Dorsolateral prefrontal cortex (tissue), 120 donors: ENCODE measurements at regions of chr7 and their contacts with region 1.

Region 1: DNA sequence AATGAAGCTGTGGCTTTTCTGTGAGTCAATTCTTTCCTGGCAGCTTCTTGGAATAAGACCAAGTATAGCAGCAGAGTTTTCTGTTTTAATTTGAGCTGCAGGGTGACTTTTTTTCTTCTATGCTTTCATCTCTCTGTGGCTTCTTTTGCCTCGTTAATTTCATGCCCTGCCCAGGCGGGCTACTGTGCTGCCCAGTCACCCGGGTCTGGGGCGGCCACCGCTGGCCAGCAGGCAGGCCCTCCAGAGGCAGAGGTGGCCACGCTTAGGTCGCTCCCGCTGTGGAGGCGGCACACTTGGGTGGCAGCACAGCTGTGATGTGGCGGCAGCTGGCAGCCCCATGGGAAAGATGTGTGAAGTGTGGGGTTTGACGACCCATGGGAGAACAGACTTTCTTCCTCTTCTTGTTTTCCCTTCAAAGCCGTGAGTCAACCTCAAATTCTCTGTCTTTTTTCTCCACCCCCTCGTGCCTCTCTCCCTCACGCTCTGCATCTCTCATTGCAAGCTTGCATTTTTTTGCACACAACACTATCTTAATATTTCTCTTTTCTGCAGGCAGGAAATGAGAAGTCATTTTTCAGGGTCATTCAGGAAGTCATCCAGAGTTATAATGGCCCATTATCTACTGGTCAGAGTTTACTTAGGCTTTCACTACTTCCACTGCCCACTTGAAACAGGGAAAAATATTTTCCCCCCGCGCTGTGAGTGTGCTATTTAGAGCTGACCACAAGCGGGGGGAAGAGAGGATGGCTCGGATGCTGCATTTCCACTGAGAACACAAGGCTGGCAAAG is 67.8 kb downstream of the EGFR start:
- DNase-seq: peak in 2 of 10 donors; percentile 60 to 68
- H3K4me3 ChIP-seq: peak overlapping the region in 30 of 59 donors; percentile 2 to 52 (median 24)
- H3K27ac ChIP-seq: peak overlapping the region in 45 of 59 donors; percentile 2 to 81 (median 47)
- H3K27me3 ChIP-seq: peaks cover 0 to 2% (median 0%) of the 10 kb centered on the region in 45 donors
- CTCF ChIP-seq: peak in 1 of 56 donors; percentile 4

Region 2: DNA sequence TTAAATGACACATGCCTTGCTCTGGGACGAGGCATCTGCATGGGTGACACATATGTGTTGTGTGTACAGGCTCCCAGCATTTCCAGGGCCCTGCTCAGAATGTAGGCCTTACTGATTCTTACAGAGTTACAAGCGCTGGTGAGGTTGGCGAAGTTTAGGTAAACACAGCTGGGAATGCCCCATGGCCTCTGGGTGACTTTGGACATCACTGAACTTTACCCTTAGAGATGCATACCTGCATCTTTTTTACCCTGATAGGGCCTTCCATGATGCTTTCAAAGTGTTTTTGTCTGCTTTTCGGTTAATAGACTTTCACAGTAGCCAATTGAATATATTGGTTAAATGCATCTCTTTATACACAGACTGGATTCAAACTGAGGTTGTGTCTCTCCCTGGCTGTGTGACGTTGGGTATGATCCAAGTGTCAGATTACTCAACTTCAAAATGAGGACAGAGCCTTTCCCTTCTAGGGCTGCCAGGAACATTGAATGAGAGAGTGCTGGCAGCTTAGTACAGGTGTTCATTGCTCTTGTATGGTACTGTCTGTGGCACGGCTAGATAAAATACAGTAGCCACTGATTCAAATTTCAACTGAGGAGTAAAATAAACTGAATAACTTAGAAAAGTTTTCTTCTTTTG is 38.3 kb before region 1 on chr7:
- intact Hi-C with region 1: loop called in 1 of 2 experiments (anchors 2 kb)
- DNase-seq: no peak
- H3K4me3 ChIP-seq: no peak overlapping the region
- H3K27ac ChIP-seq: peak overlapping the region in 1 of 59 donors; percentile 23
- H3K27me3 ChIP-seq: peaks cover 0 to 4% (median 0%) of the 10 kb centered on the region in 45 donors
- CTCF ChIP-seq: no peak

Region 3: DNA sequence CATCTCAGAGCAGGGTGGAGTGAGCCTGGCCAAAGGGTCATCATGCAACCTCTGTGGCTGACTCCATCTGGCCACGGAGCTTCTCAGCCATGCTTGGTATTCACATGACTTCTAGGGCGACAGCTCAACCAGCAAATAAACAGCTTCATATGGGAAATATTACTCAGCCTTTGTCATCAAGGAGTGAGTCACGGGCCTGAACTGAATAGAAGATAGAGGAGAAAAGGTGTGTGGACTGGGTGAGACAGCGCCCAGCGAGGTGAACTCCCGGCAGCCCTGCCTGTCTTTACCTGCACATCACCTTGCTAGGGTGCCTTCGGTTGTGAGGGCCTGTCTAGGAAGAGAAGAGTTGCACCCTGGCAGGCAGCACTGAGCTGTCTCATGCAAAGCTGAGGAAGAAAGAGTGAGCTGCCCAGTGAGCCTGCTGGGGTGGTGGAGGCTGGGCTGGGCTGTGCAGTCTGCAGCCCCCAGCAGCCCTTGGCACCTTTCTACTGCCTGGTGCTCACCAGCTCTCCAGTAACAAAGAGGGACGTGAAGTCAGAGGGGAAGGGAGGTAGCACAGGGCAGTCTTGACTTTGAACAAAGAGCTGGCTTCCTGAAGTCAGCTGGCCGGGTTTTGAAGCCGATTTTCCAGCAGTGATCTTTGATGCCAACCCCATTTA is 46.4 kb after region 1 on chr7:
- intact Hi-C with region 1: loop called in 1 of 2 experiments (anchors 5 kb)
- DNase-seq: no peak
- H3K4me3 ChIP-seq: no peak overlapping the region
- H3K27ac ChIP-seq: peak overlapping the region in 22 of 59 donors; percentile 4 to 69 (median 41)
- H3K27me3 ChIP-seq: no peaks in the 10 kb centered on the region
- CTCF ChIP-seq: no peak

Region 4: GRCh38 chr7:55212838-55213539 is 126.4 kb after region 1 on chr7:
- intact Hi-C with region 1: no loop called
- DNase-seq: peak in 1 of 10 donors; percentile 24
- H3K4me3 ChIP-seq: peak overlapping the region in 12 of 59 donors; percentile 4 to 38 (median 18)
- H3K27ac ChIP-seq: no peak overlapping the region
- H3K27me3 ChIP-seq: peaks cover 0 to 5% (median 0%) of the 10 kb centered on the region in 45 donors
- CTCF ChIP-seq: no peak